Sciatic nerve (tissue), 2 donors: ENCODE measurements at regions of chr11 and their contacts with region 1.

Region 1: DNA sequence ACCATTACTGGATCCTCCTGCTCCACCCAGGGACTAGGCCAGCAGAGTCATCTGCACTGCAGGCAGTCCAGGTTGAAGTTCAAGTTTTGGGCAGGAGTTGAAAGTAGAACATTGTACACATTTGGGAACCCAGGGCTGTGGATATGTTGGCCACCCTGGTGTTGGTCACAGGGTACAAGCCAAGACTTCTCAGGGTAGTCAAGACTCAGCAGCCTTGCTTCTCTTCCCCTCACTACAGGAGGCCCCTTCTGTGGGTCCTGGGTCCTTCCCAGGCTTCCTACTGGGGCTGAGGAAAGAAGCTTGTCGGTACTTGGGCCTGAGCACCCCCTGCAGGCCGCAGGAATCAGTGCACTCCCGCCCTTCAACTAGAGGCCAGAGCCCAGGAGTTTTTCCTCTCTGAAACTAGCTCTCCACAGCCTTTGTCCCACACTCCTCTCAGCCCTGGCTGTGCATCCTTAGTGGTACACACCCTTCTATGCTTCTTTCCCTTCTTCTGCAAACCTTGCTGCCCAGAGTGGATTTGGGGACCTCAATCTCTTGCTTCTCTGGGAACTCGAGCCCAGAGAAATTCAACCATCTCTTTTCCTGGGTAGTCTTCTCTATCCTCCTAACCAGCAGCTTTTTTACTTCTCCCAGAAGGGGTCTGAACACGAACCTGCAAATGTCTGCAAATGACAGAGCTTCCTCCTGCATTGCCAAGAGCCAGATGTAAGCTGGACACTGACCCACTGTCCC is 2.6 kb upstream of the HPX start:
- DNase-seq: peak; percentile 66
- ATAC-seq: peak; percentile 88

Region 2: GRCh38 chr11:6377902-6378639 is 65.4 kb before region 1 on chr11:
- intact Hi-C with region 1: loop called (anchors 5 kb)
- DNase-seq: no peak
- ATAC-seq: peak; percentile 39

Region 3: DNA sequence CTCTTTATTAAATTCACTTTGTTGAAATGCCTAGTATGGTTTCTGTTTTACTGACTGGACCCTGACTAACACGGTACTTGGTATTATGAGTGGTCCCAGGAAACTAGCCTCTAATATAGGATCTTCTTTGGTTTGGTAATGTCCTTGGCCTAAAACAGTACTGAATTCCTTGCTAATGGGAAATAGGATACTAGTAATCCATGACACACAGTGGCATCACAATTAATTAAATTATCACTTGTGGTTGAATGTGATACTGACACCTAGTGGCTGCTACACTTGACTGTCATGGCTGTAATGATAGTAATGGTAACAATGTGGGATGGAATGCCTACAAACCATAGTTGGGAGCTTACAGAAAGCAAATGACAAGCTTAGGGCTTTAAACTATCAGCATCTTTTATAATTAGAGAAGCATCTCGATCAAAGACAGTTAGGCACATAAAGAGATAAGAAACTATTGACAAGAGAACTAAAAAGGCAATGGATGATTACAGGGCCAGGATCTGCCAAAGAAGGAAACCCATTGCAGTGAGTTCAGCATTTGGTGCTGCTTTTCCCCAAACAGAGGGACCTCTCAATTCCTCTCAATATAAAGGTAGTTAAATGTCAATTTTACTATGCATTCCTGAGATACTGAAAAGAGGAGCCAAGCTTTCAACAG is 62.3 kb after region 1 on chr11:
- intact Hi-C with region 1: no loop called
- DNase-seq: no peak
- ATAC-seq: peak; percentile 82